ENCODE measurements at regions of chr3 and their contacts with region 1.

Region 1: DNA sequence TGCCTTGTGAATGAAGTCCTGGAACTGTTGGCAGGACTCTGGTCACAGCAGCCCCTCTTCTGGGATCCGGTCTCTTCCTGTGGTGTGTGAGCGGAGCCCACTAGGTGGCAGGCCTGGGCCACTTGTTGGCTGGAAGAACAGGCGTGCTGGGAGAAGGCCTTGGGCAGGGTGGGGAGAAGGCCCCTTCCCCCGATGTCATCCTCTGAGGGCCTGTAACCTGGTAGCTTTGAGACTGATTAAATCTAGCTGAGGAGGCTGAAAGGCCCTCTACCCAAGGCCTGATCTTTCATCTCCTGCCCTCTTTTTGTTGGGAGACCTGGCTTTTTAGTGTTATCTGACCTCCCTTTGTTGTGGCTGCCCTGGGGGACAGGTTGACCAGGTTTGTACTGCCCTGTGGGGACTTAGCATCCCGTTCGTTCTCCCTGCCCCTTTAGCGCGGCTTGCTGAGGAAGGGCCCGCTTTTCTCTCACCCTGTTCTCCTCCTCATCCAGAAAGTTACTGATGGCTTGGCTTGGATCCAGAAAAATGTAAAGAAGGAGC is 48.3 kb downstream of the CHCHD6 start:
- DNase-seq: peak; percentile 57
- H3K4me3 ChIP-seq: no peak overlapping the region
- H3K27ac ChIP-seq: no peak overlapping the region
- H3K27me3 ChIP-seq: no peaks in the 10 kb centered on the region
- CTCF ChIP-seq: peak; percentile 97

Region 2: DNA sequence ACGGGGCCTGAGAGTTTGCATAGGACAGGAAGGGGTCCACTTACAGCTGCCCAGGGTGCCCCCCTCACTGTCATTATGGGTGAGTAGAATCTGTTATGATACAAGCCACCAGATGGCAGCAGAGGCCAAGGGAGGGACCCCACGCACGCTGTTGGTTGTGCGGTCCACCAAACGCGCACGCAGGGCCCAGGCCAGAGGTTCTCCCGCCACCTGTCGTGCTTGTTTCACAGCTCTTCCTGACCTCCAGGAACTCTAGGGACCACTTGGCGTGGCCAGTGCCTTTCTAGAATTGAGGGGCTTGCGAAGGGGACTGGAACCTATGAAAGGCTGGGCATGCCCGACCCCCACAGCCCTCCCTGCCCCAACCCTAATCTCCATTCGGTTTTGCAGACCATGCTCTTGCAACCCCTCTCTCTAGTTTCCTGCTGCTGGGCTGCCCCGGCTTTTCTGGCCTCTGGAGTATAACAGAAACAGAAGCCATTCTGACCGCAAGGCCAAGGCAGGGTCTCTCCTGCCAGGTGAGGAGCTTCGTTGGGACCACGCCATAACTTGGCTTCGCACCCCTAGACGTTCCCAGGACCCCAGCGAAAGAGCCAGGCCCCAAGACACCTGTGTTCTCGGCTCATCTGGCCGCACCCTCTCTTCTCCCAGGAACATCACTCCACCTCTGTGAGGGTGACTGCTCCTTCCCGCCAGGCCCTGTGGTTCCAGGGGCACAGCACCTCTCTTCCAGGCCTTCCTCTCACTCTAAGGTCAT is 618.0 kb before region 1 on chr3:
- CTCF ChIA-PET with region 1: no interaction called
- POLR2A ChIA-PET with region 1: no interaction called
- DNase-seq: peak; percentile 8
- H3K4me3 ChIP-seq: no peak overlapping the region
- H3K27ac ChIP-seq: peak overlapping the region; percentile 11
- H3K27me3 ChIP-seq: peaks cover 21% of the 10 kb centered on the region
- CTCF ChIP-seq: peak; percentile 79

Region 3: DNA sequence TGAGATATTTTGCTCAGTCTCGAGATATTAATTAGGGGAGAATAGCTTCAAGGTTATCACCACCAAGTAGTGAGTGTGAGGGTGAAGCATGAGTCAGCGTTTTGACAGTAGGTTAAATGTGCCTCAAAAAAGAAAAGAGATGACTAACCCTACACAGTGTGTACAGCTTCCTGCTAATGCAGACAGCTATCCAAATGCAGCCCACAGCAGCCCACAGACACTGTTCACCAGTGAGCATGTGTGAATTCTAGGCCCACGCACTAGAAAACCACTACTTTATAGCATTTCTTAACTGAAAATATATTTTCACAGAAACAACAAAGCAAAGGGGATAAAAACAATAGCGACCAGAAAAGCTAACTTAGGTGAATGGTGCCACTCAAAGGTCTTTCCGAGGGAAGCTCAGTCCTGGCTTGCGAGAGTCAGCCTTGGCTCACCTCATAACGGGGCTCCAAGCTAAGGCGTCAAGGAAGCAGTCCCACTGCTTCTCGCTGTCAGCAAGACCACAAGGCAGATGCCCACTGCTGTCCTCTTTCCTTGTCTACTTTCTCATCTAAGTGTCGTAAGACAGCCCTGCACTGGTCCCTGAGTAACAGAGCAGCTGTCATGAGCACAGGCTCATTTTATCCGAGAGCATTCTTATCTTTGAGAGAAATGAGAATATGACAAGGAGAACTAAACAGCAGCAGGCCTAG is 145.0 kb before region 1 on chr3:
- CTCF ChIA-PET with region 1: no interaction called
- POLR2A ChIA-PET with region 1: no interaction called
- DNase-seq: peak; percentile 16
- H3K4me3 ChIP-seq: no peak overlapping the region
- H3K27ac ChIP-seq: no peak overlapping the region
- H3K27me3 ChIP-seq: no peaks in the 10 kb centered on the region
- CTCF ChIP-seq: no peak

Region 4: DNA sequence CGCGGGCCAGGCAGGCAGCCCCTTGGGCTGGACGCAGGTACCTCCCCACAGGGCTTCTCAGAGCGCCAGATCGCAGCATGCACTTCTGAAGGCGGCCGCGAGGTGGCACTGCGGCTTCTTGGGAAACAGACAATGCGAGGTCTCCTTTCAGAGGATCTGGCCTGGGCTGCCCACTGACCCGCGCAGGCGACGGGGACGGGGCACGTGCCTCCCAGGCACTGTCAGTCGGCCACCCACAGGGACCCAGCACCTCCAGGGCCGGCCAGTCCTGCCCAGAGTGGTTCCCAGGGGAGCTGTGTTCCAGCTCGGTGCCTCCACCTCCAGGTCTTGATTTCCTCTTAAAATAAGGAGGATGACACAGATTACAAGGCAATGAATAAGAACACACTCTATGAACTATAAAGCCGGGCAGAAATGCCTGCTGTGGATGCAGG is 73.0 kb before region 1 on chr3:
- CTCF ChIA-PET with region 1: interaction called, 15 read pairs
- POLR2A ChIA-PET with region 1: no interaction called
- DNase-seq: peak; percentile 37
- H3K4me3 ChIP-seq: no peak overlapping the region
- H3K27ac ChIP-seq: no peak overlapping the region
- H3K27me3 ChIP-seq: peaks cover 35% of the 10 kb centered on the region
- CTCF ChIP-seq: peak; percentile 90

Region 5: DNA sequence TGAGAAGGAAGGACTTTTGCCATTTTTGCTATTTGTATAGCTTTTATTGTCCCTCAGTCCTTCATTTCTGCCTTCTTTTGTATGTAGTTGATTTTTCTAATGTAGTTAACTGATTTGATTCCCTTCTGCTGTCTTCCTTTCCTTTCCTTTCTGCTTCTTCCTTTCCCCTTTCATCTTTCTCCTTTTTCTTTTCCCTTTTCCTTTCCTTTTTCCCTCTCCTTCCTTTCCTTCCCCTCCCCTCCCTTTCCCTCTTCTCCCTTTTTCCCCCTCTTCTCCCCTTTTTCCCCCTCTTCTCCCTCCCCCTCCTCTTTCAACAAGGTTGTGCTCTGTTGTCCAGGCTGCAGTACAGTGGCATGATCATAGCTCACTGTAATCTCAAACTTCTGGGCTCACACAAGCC is 10.7 kb after region 1 on chr3:
- CTCF ChIA-PET with region 1: interaction called, 12 read pairs
- POLR2A ChIA-PET with region 1: no interaction called
- DNase-seq: no peak
- H3K4me3 ChIP-seq: no peak overlapping the region
- H3K27ac ChIP-seq: no peak overlapping the region
- H3K27me3 ChIP-seq: no peaks in the 10 kb centered on the region
- CTCF ChIP-seq: no peak

Region 6: GRCh38 chr3:126781889-126782491 is 29.6 kb after region 1 on chr3:
- CTCF ChIA-PET with region 1: interaction called, 11 read pairs
- POLR2A ChIA-PET with region 1: no interaction called
- DNase-seq: peak; percentile 55
- H3K4me3 ChIP-seq: no peak overlapping the region
- H3K27ac ChIP-seq: peak overlapping the region; percentile 95
- H3K27me3 ChIP-seq: no peaks in the 10 kb centered on the region
- CTCF ChIP-seq: no peak

Region 7: DNA sequence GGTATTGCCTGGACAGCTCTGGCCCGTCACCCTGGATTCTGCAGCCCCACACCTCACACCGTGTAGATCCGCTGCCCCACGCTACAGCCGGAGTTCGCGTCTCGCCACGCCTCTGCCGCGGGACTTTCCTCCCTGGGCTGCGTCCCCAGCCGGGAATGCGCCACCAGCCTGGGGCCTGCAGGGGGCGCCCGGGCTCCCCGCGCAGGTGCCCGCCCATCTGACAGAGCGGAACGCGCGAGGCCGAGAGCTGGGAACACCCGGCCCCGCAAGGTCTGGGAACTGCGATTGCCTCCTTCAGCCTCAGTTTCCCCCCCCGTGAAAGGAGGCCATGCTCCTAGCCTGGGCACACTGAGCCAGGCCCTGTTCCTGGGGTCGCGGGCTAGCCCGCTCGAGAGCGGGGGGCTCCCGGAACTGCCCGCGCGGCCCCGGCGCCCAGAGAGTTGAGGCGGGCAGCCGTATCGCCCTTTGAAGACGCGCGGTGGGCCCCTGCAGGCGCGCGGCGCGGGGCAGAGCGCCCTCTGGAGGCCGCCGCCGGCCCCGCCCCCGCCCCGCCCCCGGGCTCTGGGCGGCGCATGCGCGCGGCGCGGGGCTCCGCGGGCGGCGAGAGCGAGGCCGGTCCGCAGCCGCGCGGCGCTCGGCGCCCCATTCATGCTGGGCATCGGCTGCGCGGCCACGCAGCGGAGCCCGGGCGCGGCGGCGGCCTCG is 230.2 kb after region 1 on chr3 and contains the start of gene PLXNA1:
- CTCF ChIA-PET with region 1: interaction called, 27 read pairs
- POLR2A ChIA-PET with region 1: interaction called, 3 read pairs
- DNase-seq: peak; percentile 23
- H3K4me3 ChIP-seq: peak within 1 kb of the TSS; percentile 70
- H3K27ac ChIP-seq: peak within 1 kb of the TSS; percentile 39
- H3K27me3 ChIP-seq: peaks cover 7% of the 10 kb centered on the region
- CTCF ChIP-seq: peak; percentile 85
- polyA plus RNA-seq, gene PLXNA1: 22.0 and 30.8 TPM in 2 replicates

Region 8: DNA sequence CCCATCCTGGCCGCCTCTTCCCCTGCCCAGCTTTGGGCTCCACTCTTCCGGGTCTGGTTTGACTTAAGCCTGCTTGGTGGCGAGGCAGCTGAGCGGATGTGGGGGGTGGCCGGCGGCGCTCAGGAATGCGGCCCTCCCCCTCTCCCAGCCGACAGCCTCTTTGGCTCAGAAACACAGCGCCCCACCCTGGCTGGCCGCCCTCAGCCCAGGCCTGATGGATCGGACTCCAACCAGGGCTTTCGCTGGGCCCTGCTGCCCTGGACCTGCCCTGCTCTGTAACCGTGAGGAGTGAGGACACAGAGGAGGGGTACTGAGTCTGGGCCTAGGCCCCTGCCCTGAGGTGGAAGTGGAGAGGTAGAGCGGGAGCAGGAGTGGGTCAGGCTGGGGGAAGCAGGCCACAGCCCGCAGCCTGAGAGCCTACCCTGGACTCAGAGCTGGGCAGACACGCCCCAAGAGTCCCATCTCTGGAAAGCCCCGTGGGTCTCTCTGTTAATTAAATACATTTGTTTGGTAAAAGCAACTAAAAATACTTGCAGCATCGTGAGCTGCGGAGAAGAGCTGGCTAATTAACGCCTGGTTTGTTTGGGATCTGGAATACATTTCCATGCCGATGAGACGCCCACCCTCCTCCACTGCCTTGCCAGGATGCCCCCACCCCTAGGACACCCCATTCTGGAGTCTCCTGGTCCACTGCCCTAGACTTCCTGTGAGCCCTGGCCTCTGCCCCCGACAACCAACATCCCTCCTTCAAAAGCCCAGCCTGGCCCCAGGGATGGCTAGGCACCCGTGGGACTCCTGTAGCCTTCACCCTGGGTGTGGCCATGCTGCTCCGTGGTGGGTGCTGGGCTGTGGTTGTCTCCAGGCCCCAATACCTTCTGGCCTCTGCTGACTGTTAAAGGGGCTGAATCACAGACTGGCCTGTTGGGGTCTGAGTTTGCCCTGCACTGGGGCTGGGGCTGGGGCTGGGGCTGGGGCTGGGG is 250.1 kb after region 1 on chr3:
- CTCF ChIA-PET with region 1: interaction called, 10 read pairs
- POLR2A ChIA-PET with region 1: interaction called, 3 read pairs
- DNase-seq: peak; percentile 76
- H3K4me3 ChIP-seq: peak overlapping the region; percentile 36
- H3K27ac ChIP-seq: peak overlapping the region; percentile 93
- H3K27me3 ChIP-seq: no peaks in the 10 kb centered on the region
- CTCF ChIP-seq: peak; percentile 58

Region 9: DNA sequence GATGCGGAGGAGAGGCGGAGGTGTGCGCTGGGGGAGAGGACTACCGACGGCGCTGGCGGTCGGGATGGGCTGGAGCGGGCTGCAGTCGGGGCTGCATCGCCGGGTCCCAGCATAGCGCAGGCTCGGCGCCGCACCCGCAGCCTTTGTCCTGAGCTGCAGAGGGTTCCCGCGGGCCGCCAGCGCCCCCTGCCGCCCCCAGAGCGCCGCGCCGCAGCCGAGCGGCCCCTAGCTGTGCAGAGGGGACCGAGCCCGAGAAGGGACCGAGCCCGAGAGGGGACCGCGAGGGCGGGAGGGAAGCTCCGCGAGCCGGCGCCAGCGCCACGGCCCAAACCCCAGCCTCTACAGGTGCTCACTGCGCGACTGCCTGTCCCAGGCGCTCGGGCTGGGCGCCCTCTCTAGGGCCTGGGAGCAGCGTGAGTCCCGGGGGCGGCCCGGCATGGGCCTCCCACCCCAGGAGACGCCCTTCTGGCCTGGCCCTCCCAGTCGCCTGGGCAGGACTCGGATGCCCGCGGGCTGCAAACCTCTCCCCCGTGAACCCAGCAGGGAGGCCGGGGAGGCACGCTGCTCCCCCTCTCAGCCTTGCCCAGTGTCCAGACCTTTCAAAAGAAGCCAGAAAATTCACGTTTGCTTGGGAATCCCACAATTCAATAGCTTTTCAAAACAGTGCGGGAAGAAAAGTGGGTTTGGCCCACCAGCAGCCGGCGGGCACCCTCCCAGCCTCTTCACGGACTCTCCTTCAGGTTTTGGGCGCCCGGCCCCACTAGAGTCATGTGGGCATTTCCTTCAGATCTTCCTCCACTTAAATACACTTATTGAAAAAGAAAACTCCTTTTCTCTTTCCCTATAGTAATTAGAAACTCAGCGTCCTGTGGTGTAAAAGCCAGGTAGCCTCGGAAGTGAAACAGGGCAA is 703.4 kb after region 1 on chr3:
- CTCF ChIA-PET with region 1: interaction called, 14 read pairs
- POLR2A ChIA-PET with region 1: no interaction called
- DNase-seq: no peak
- H3K4me3 ChIP-seq: peak overlapping the region; percentile 48
- H3K27ac ChIP-seq: no peak overlapping the region
- H3K27me3 ChIP-seq: peaks cover 45% of the 10 kb centered on the region
- CTCF ChIP-seq: peak; percentile 75